PC-9 (cell line): ENCODE measurements at regions of chr2 and their contacts with region 1.

Region 1: DNA sequence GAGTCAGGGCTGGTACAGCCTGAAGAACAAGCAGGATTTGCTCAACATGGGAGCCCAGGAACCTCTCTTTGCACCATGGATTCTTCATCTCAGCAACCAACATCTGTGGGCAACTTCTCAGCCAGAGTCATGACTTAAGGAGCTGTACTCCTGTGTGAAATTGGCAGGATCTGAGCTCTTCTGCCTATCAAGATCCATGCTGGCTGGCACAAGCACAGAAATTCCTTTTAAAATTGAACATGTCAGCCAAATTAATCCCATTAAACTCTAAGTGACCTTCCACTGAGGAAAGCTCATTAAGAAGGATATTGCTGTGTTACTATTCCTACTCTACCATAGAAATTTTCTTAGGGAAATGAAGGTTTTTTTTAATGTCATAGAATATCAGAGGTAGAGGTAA is 110.5 kb upstream of the SCG2 start:
- DNase-seq: no peak
- H3K4me3 ChIP-seq: no peak overlapping the region
- H3K27ac ChIP-seq: no peak overlapping the region
- H3K4me1 ChIP-seq: no peaks in the 10 kb centered on the region
- H3K27me3 ChIP-seq: no peaks in the 10 kb centered on the region
- CTCF ChIP-seq: no peak

Region 2: DNA sequence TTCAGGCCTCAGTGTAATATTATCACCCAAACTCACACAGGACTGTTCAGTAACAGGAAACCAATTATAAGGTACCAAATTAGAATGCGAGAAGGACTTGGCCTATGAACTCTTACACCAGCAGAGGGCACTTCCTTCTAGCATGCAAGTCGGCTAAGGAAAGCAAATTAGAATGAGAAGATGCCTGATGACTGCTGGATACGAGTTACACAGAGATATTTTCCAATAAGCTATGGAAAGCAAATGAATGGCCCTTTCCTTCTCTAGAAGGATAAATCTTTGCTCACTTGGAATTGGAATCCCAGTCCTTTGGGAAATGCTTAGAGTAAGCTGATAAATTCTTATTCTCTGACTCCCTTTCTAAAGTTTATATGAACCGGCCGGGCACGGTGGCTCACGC is 14.9 kb after region 1 on chr2:
- CTCF ChIA-PET with region 1: no interaction called
- POLR2A ChIA-PET with region 1: interaction called, 10 read pairs
- intact Hi-C with region 1: no loop called
- DNase-seq: peak; percentile 39 to 73
- H3K4me3 ChIP-seq: no peak overlapping the region
- H3K27ac ChIP-seq: no peak overlapping the region
- H3K4me1 ChIP-seq: peaks cover 19% of the 10 kb centered on the region
- H3K27me3 ChIP-seq: no peaks in the 10 kb centered on the region
- CTCF ChIP-seq: peak; percentile 73